CD4-positive, alpha-beta memory T cell (primary cell): ENCODE measurements at regions of chr7 and their contacts with region 1.

Region 1: DNA sequence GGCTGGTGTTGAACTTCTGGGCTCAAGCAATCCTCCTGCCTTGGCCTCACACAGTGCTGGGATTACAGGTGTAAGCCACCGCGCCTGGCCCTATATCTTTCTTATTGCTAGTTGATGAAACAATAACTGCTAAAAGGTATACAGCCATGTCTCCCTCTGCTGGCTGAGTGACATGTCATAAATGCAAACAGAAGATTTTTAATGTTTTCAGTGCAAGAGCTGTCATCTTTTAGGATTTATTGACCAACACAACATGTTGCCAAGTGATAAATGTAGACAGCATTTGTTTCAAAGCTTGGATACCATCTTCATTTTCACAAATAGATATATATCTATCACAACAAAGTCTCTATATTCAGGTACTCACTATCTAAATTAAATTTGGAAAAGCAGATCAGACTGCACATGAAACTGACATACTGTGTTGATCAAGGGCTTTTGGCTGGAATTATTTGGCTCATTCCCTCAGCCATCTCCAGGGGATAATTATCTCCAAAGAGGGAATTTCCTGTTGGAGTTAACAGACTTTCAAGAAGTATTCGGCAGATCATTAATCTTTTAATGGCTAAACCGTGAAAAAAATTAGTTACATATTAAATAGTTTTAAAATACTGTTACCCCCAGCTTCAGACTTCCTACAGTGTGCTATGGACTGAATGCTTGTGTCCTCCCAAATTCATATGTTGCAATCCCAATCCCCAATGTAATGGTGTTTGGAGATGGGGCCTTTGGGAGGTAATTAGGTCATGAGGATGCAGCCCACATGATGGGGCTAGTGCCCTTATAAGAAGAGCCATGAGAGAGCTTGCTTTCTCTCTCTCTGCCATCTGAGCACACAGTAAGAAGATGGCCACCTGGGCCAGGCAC is 41.3 kb upstream of the SRPK2 start:
- DNase-seq: peak; percentile 49 to 58 (median 56)
- H3K4me3 ChIP-seq: no peak overlapping the region
- H3K4me3 Mint-ChIP-seq: no peak overlapping the region
- H3K27ac ChIP-seq: no peak overlapping the region
- H3K27ac Mint-ChIP-seq: peak overlapping the region in 2 of 7 donors; percentile 22 to 46
- H3K4me1 ChIP-seq: peaks cover 5% of the 10 kb centered on the region
- H3K4me1 Mint-ChIP-seq: peaks cover 3 to 8% (median 4%) of the 10 kb centered on the region in 4 donors
- H3K27me3 ChIP-seq: no peaks in the 10 kb centered on the region
- H3K27me3 Mint-ChIP-seq: no peaks in the 10 kb centered on the region

Region 2: DNA sequence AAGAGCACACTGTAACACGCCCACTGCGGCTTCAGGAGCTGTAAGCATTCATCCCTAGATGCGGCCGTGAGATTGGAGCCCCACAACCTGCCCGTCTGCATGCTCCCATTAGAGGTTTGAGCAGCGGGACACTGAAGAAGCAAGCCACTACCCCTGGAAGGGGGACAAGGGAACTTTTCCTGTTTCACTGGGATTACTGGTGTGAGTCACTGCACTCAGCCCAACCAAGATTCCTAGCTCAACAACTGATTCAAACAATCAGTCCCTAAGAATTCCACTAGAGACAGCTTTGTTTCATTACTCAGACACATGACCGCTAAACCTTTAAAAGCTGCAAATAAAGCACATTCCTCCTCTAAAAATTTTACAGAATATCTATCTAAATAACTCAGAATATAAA is 1292.0 kb before region 1 on chr7:
- CTCF ChIA-PET with region 1: no interaction called
- POLR2A ChIA-PET with region 1: no interaction called
- intact Hi-C with region 1: no loop called
- DNase-seq: no peak
- H3K4me3 ChIP-seq: no peak overlapping the region
- H3K4me3 Mint-ChIP-seq: no peak overlapping the region
- H3K27ac ChIP-seq: no peak overlapping the region
- H3K27ac Mint-ChIP-seq: peak overlapping the region in 1 of 7 donors; percentile 48
- H3K4me1 ChIP-seq: no peaks in the 10 kb centered on the region
- H3K4me1 Mint-ChIP-seq: peaks cover 0 to 1% (median 0%) of the 10 kb centered on the region in 4 donors
- H3K27me3 ChIP-seq: no peaks in the 10 kb centered on the region
- H3K27me3 Mint-ChIP-seq: no peaks in the 10 kb centered on the region

Region 3: DNA sequence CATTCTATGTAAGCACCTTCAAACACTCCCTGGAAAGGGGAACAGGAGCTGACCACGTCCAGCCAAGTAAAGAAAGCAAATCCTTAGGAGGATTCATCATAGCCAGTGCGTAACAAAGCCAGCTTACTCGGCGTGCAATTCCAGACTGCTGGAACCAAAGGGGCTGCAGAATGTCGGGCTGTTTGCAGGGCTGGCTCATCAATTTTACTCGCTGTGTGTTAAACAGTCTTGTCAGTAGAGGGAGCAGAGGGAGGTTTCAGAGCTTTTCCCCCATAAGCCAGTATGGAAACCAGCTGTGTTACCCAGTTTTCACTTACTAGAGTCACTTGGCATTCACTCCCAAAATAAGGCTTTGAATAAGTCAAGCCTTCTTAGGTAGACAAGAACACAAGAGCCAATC is 288.9 kb before region 1 on chr7:
- CTCF ChIA-PET with region 1: interaction called, 15 read pairs
- POLR2A ChIA-PET with region 1: no interaction called
- intact Hi-C with region 1: no loop called
- DNase-seq: peak in 1 of 5 donors; percentile 2
- H3K4me3 ChIP-seq: no peak overlapping the region
- H3K4me3 Mint-ChIP-seq: no peak overlapping the region
- H3K27ac ChIP-seq: no peak overlapping the region
- H3K27ac Mint-ChIP-seq: no peak overlapping the region
- H3K4me1 ChIP-seq: no peaks in the 10 kb centered on the region
- H3K4me1 Mint-ChIP-seq: peaks cover 13 to 26% (median 21%) of the 10 kb centered on the region in 4 donors
- H3K27me3 ChIP-seq: no peaks in the 10 kb centered on the region
- H3K27me3 Mint-ChIP-seq: no peaks in the 10 kb centered on the region

Region 4: DNA sequence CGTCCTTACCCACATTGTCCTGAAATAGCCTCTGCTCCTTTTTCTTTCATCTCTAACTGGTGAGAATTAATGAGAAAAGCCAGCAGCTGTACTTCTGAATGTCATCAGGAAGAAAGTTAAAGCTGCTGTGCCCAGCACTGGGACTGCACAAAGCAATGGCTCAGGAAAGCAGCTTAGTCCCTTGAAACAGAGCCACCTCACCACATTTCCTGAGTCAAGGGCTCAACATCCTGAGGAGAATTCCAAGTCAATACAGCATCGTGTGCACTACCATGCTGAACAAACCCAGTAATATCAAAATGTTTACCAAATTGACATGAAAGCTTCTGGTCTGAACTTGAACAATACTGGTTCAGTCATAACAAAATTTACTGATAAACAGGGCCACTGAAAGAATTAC is 275.9 kb before region 1 on chr7:
- CTCF ChIA-PET with region 1: interaction called, 11 read pairs
- POLR2A ChIA-PET with region 1: no interaction called
- intact Hi-C with region 1: loop called (anchors 2 kb)
- DNase-seq: no peak
- H3K4me3 ChIP-seq: no peak overlapping the region
- H3K4me3 Mint-ChIP-seq: no peak overlapping the region
- H3K27ac ChIP-seq: no peak overlapping the region
- H3K27ac Mint-ChIP-seq: peak overlapping the region in 3 of 7 donors; percentile 30 to 41 (median 32)
- H3K4me1 ChIP-seq: peaks cover 6% of the 10 kb centered on the region
- H3K4me1 Mint-ChIP-seq: peaks cover 0 to 13% (median 3%) of the 10 kb centered on the region in 4 donors
- H3K27me3 ChIP-seq: no peaks in the 10 kb centered on the region
- H3K27me3 Mint-ChIP-seq: no peaks in the 10 kb centered on the region

Region 5: DNA sequence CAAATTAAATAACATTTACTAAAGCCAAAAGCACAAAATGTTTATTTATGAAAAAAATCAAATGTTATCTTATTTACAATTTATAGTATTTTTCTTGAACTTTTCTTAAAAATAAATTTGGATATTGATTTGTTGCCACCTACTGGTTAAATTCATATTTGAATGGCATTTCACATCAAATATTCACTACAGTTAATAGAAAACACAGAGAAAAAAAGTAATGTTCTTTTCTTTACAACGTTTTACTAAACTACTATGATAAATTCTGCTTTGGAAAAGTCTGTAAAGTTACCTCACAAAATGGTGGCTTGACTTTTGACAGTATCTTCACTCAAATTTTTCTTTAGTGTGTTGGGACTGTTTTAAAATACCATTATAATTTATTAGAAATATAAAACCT is 94.0 kb before region 1 on chr7:
- CTCF ChIA-PET with region 1: interaction called, 5 read pairs
- POLR2A ChIA-PET with region 1: no interaction called
- intact Hi-C with region 1: loop called (anchors 1 kb)
- DNase-seq: peak in 3 of 5 donors; percentile 17 to 34 (median 22)
- H3K4me3 ChIP-seq: no peak overlapping the region
- H3K4me3 Mint-ChIP-seq: no peak overlapping the region
- H3K27ac ChIP-seq: no peak overlapping the region
- H3K27ac Mint-ChIP-seq: no peak overlapping the region
- H3K4me1 ChIP-seq: peaks cover 13% of the 10 kb centered on the region
- H3K4me1 Mint-ChIP-seq: peaks cover 19 to 31% (median 26%) of the 10 kb centered on the region in 4 donors
- H3K27me3 ChIP-seq: no peaks in the 10 kb centered on the region
- H3K27me3 Mint-ChIP-seq: no peaks in the 10 kb centered on the region

Region 6: DNA sequence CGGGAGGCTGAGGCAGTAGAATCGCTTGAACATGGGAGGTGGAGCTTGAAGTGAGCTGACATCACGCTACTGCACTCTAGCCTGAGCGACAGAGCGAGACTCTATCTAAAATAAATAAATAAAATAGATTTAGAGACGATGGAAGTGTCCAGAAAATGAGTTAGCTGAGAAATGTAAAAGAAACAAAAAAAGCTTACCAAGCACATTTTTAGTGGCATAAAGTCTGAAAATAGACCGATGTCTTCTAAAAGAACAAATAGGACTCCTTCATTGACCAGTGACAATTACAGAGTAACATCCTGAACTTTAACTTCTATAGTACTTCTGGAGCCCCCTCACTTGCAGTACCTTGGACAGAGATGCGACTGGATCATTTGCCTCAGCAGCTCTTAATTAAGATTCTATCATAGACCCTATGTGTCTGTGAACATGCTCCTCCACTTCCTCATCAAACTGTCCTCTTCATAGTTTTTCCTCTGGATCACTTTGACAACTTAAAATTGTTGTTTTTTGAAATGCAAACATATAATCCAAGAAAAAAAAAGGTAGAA is 16.0 kb before region 1 on chr7:
- CTCF ChIA-PET with region 1: interaction called, 13 read pairs
- POLR2A ChIA-PET with region 1: no interaction called
- intact Hi-C with region 1: no loop called
- DNase-seq: no peak
- H3K4me3 ChIP-seq: no peak overlapping the region
- H3K4me3 Mint-ChIP-seq: no peak overlapping the region
- H3K27ac ChIP-seq: no peak overlapping the region
- H3K27ac Mint-ChIP-seq: no peak overlapping the region
- H3K4me1 ChIP-seq: no peaks in the 10 kb centered on the region
- H3K4me1 Mint-ChIP-seq: peaks cover 0 to 4% (median 3%) of the 10 kb centered on the region in 4 donors
- H3K27me3 ChIP-seq: no peaks in the 10 kb centered on the region
- H3K27me3 Mint-ChIP-seq: no peaks in the 10 kb centered on the region

Region 7: DNA sequence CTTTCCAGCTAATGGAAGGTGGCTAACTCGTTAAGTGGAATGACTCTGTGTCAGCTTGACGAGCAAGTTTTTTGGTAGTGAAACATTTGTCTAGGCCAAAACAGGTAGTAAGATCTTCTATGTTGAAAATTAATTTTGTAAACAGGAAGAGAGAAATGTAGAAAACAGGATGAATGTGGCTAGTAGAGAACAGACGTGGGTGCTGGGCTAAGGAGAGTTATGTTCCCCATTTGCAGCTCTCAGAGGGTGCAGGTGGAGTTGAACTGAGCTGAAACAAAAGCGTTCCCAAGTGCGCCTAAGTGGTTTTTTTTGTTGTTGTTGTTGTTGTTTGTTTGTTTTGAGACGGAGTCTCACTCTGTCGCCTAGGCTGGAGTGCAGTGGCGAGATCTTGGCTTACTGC is 18.2 kb after region 1 on chr7:
- CTCF ChIA-PET with region 1: interaction called, 16 read pairs
- POLR2A ChIA-PET with region 1: interaction called, 9 read pairs
- intact Hi-C with region 1: no loop called
- DNase-seq: peak in 4 of 5 donors; percentile 5 to 30 (median 21)
- H3K4me3 ChIP-seq: no peak overlapping the region
- H3K4me3 Mint-ChIP-seq: peak overlapping the region; percentile 6 to 84 (median 71)
- H3K27ac ChIP-seq: no peak overlapping the region
- H3K27ac Mint-ChIP-seq: peak overlapping the region; percentile 4 to 95 (median 86)
- H3K4me1 ChIP-seq: peaks cover 36% of the 10 kb centered on the region
- H3K4me1 Mint-ChIP-seq: peaks cover 21 to 48% (median 29%) of the 10 kb centered on the region in 4 donors
- H3K27me3 ChIP-seq: no peaks in the 10 kb centered on the region
- H3K27me3 Mint-ChIP-seq: no peaks in the 10 kb centered on the region

Region 8: GRCh38 chr7:105487579-105488571 is 57.9 kb after region 1 on chr7:
- CTCF ChIA-PET with region 1: interaction called, 39 read pairs
- POLR2A ChIA-PET with region 1: interaction called, 9 read pairs
- intact Hi-C with region 1: loop called (anchors 1 kb)
- DNase-seq: peak in 4 of 5 donors; percentile 28 to 40 (median 30)
- H3K4me3 ChIP-seq: no peak overlapping the region
- H3K4me3 Mint-ChIP-seq: no peak overlapping the region
- H3K27ac ChIP-seq: no peak overlapping the region
- H3K27ac Mint-ChIP-seq: peak overlapping the region in 3 of 7 donors; percentile 0 to 86 (median 33)
- H3K4me1 ChIP-seq: no peaks in the 10 kb centered on the region
- H3K4me1 Mint-ChIP-seq: peaks cover 0 to 4% (median 3%) of the 10 kb centered on the region in 4 donors
- H3K27me3 ChIP-seq: no peaks in the 10 kb centered on the region
- H3K27me3 Mint-ChIP-seq: no peaks in the 10 kb centered on the region